Activated T-helper 1 cell treated with anti-CD3 and anti-CD28 coated beads, Interleukin-12 subunit alpha, Interleukin-12 subunit beta, Interleukin-2, Interleukin-4 antibody, amounts not matched to agents 30 ng/mL and 10 ng/mL and 1 ng/mL, durations not matched to agents 14 hours and 24 hours and 36 hours (primary cell): ENCODE measurements at regions of chr11 and their contacts with region 1.

Region 1: DNA sequence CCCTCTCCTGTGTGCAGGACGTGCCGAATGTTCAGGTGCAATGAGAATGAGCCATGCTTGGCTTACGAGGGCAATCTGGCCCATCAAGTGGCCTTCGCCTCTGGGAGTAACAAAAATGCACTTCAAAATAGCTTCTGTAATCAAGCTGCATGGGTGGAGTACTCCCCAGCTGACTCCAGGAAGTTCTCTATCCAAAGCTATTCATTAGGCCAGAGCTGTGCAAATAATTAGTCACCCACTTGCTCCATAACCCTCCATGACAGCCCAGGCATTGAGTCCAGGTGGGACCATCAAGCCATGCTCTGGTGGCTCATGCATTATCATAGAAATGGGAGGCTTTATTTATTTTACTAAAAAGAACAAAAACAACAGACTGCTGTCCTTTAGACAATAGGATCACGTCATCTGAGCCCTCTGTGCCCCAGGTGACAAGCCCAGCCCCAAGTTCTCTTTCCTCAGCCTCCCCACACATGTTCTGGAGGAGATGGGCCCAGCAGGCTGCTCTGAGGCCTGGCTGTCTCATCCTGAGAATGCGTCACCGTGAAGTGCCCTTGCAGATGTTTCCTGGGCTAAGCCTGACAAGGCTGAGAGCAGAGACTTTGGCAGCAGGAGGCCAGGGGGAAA is 244.7 kb downstream of the ETS1 start:
- DNase-seq: peak; percentile 70
- H3K4me3 Mint-ChIP-seq: peak overlapping the region; percentile 76
- H3K27ac Mint-ChIP-seq: peak overlapping the region; percentile 85
- H3K4me1 Mint-ChIP-seq: peaks cover 92% of the 10 kb centered on the region
- H3K27me3 Mint-ChIP-seq: no peaks in the 10 kb centered on the region

Region 2: DNA sequence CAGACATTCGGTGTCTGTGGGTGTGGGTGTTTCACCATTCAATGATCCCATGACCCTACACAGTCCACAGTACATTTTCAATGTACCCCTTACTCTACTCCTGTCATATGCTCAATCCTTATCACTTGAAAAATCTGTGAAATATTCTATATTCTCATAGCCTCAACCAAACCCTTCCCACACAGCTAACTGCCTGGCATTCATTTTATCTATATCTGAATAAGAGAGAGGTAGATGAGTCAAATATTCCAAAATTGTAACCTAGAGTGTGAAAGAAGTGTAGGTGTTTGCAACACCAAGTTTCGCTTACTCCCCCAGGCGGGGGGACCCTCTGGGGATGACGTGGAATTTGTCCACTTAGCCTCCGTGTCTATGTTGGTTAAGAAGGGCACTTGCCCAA is 110.0 kb before region 1 on chr11:
- intact Hi-C with region 1: loop called (anchors 1 kb)
- DNase-seq: no peak
- H3K4me3 Mint-ChIP-seq: peak overlapping the region; percentile 58
- H3K27ac Mint-ChIP-seq: peak overlapping the region; percentile 85
- H3K4me1 Mint-ChIP-seq: peaks cover 58% of the 10 kb centered on the region
- H3K27me3 Mint-ChIP-seq: peaks cover 2% of the 10 kb centered on the region

Region 3: DNA sequence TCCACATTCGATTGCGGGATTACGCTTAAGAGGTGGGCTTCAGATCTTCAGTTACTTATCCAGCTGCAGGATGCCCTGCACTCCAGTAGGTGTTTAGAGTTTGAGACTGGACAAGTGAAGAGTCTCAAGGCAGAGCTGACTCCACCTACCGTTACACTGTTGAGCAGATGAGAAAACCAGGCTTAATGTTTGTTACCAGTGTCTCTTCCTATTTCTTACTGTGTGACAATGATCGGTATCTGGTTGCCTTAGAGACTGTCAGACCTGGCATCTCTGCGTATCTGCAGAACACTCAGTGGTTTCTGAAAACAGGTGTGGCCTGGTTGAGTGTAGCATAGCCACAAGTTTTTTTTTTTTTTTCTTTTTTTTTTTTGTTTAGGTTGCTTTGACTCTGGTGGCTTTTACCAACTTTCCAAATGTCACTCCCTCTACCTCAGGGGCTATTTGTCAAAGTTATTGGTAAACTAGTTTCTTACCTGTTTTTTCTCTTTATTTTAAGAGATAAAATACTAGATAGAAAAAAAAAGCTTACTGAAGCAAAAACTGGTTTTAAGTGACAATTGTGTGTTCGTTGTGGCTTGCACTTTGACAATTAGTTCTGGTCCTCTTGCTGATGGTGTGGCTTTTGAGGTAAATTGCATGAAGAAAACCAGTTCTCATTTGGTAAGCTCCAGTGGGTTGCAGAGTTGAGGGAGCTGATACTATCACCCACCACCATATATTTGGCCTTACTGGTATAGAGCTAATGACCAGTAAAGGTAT is 40.0 kb before region 1 on chr11:
- intact Hi-C with region 1: loop called (anchors 1 kb)
- DNase-seq: peak; percentile 79
- H3K4me3 Mint-ChIP-seq: peak overlapping the region; percentile 91
- H3K27ac Mint-ChIP-seq: peak overlapping the region; percentile 97
- H3K4me1 Mint-ChIP-seq: peaks cover 85% of the 10 kb centered on the region
- H3K27me3 Mint-ChIP-seq: no peaks in the 10 kb centered on the region

Region 4: GRCh38 chr11:128323381-128323780 is 19.2 kb before region 1 on chr11:
- intact Hi-C with region 1: loop called (anchors 1 kb)
- DNase-seq: no peak
- H3K4me3 Mint-ChIP-seq: peak overlapping the region; percentile 70
- H3K27ac Mint-ChIP-seq: peak overlapping the region; percentile 95
- H3K4me1 Mint-ChIP-seq: peaks cover 91% of the 10 kb centered on the region
- H3K27me3 Mint-ChIP-seq: no peaks in the 10 kb centered on the region

Region 5: DNA sequence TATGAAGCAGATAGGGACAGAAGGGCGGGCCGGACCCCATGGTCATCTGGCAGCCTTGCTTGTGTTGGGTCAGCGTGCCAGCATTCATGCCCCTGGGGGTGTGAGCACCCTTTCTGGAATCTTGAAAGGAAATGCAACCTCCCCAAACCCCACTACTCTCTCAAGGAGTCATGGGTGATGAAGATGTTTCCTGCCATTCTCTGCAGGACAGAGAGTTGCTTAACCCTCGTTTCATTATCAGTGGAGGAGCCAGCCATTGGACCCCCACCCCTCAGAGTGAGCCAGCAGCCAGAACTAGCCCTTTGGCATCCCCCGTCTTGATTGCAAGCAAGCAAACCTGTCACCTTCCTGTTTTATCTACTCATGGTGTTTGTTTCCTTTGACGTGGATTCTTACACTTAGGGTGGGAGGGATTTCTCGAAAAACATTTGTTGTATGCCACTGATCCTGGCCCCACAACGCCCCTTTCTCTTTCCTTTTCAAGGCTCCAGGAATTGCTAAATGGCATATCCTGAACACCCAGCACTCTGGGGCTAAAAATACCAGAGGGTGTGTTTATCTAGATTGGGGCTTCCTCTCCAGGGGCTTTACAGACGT is 13.6 kb before region 1 on chr11:
- intact Hi-C with region 1: loop called (anchors 1 kb)
- DNase-seq: no peak
- H3K4me3 Mint-ChIP-seq: peak overlapping the region; percentile 45
- H3K27ac Mint-ChIP-seq: peak overlapping the region; percentile 99
- H3K4me1 Mint-ChIP-seq: peaks cover 85% of the 10 kb centered on the region
- H3K27me3 Mint-ChIP-seq: no peaks in the 10 kb centered on the region

Region 6: GRCh38 chr11:128379587-128380580 is 37.3 kb after region 1 on chr11:
- intact Hi-C with region 1: loop called (anchors 2 kb)
- DNase-seq: peak; percentile 9
- H3K4me3 Mint-ChIP-seq: no peak overlapping the region
- H3K27ac Mint-ChIP-seq: peak overlapping the region; percentile 45
- H3K4me1 Mint-ChIP-seq: peaks cover 28% of the 10 kb centered on the region
- H3K27me3 Mint-ChIP-seq: no peaks in the 10 kb centered on the region

Region 7: GRCh38 chr11:128686745-128687177 is 344.1 kb after region 1 on chr11:
- intact Hi-C with region 1: no loop called
- DNase-seq: peak; percentile 41
- H3K4me3 Mint-ChIP-seq: peak overlapping the region; percentile 72
- H3K27ac Mint-ChIP-seq: no peak overlapping the region
- H3K4me1 Mint-ChIP-seq: peaks cover 45% of the 10 kb centered on the region
- H3K27me3 Mint-ChIP-seq: peaks cover 75% of the 10 kb centered on the region

Region 8: GRCh38 chr11:128757235-128757711 is 414.6 kb after region 1 on chr11:
- intact Hi-C with region 1: loop called (anchors 5 kb)
- DNase-seq: peak; percentile 55
- H3K4me3 Mint-ChIP-seq: peak overlapping the region; percentile 63
- H3K27ac Mint-ChIP-seq: peak overlapping the region; percentile 95
- H3K4me1 Mint-ChIP-seq: peaks cover 68% of the 10 kb centered on the region
- H3K27me3 Mint-ChIP-seq: no peaks in the 10 kb centered on the region